GM12878 (cell line): ENCODE measurements at regions of chr12 and their contacts with region 1.

Region 1: GRCh38 chr12:110563702-110564640 is 19.1 kb downstream of the PPTC7 start:
- DNase-seq: no peak
- ATAC-seq: peak; percentile 10; the same call in 1 of the 3 replicates
- H3K4me3 ChIP-seq: no peak overlapping the region
- H3K27ac ChIP-seq: peak overlapping the region; percentile 33; the same call in 1 of the 2 replicates
- H3K4me1 ChIP-seq: peaks cover 20% of the 10 kb centered on the region; the same call in 1 of the 2 replicates
- H3K27me3 ChIP-seq: no peaks in the 10 kb centered on the region
- CTCF ChIP-seq: no peak
- EP300 ChIP-seq: no peak
- POLR2A ChIP-seq: no peak
- RAD21 ChIP-seq: no peak

Region 2: DNA sequence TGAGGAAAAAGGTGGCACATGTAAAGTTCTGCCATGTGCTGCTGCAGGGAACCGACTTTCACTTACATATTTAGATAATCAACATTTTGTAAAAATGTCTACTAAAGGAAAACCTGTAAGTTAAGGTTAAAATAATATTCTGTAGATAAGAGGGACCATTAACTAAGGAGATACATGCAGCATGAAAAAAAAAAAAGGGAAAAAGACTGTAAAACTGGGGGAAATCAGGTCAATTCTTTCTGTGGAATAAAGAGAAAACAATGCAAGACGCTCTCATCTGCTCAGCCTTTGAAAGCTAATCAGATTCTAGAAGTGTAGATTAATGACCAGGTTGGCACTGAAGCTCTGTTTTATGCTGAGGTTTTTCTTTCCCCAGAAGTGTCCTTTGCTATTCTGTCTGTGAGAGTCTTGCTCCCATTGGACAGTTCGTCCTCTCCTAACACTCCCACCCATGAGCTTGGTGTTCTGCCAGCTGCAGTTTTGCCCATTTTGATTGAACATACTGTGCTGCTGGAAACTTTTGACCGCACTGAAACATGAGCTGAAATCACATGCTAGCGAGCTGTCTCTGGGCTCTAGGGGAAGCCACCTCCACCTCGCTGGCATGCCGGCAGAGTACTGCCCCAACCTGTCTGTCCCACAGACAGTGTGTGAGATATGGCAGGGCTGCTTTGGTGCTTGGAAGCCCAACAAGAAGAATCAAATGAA is 20.6 kb before region 1 on chr12:
- CTCF ChIA-PET with region 1: interaction called, 10 read pairs
- POLR2A ChIA-PET with region 1: interaction called, 14 read pairs
- RAD21 ChIA-PET with region 1: interaction called, 9 read pairs
- SMC1A ChIA-PET with region 1: interaction called, 16 read pairs
- in situ Hi-C with region 1: no loop called
- intact Hi-C with region 1: no loop called
- DNase-seq: peak; percentile 90
- ATAC-seq: peak; percentile 92
- H3K4me3 ChIP-seq: no peak overlapping the region; the same call in 1 of the 2 replicates
- H3K27ac ChIP-seq: peak overlapping the region; percentile 94
- H3K4me1 ChIP-seq: peaks cover 28% of the 10 kb centered on the region
- H3K27me3 ChIP-seq: no peaks in the 10 kb centered on the region
- CTCF ChIP-seq: no peak
- EP300 ChIP-seq: peak in 1 of 2 experiments; percentile 53; a peak in 1 of 4 replicates
- POLR2A ChIP-seq: 0 out of 2 replicates have a peak, but pooled peaks have one; percentile 26
- RAD21 ChIP-seq: no peak

Region 3: DNA sequence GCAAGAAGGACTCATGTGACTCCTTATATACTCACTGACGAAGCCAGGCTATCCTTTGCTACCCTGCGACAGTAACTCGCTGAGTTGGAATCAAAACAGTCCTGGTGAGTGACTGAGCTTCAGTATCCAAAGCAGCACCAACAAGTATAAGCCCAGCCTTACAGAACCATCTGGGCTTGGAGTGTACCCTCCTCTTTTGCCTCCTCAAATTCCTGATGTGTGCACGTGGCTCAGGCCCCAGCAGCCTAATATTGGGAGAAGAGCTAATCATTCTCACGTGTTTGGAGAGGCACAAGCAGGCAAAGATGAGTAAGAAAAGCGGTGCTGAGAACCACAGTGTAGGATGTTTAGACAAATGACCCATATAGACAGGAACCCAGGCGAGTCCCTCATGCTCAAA is 15.3 kb before region 1 on chr12:
- CTCF ChIA-PET with region 1: interaction called, 10 read pairs
- POLR2A ChIA-PET with region 1: interaction called, 14 read pairs
- RAD21 ChIA-PET with region 1: interaction called, 9 read pairs
- SMC1A ChIA-PET with region 1: interaction called, 16 read pairs
- in situ Hi-C with region 1: no loop called
- intact Hi-C with region 1: no loop called
- DNase-seq: no peak
- ATAC-seq: no peak
- H3K4me3 ChIP-seq: no peak overlapping the region
- H3K27ac ChIP-seq: peak overlapping the region; percentile 31; the same call in 1 of the 2 replicates
- H3K4me1 ChIP-seq: peaks cover 16% of the 10 kb centered on the region
- H3K27me3 ChIP-seq: no peaks in the 10 kb centered on the region
- CTCF ChIP-seq: no peak
- EP300 ChIP-seq: no peak
- POLR2A ChIP-seq: no peak
- RAD21 ChIP-seq: no peak